Activated T-helper 1 cell treated with anti-CD3 and anti-CD28 coated beads, Interleukin-12 subunit alpha, Interleukin-12 subunit beta, Interleukin-2, Interleukin-4 antibody, amounts not matched to agents 30 ng/mL and 10 ng/mL and 1 ng/mL, durations not matched to agents 14 hours and 24 hours and 36 hours (primary cell): ENCODE measurements at regions of chr16 and their contacts with region 1.

Region 1: DNA sequence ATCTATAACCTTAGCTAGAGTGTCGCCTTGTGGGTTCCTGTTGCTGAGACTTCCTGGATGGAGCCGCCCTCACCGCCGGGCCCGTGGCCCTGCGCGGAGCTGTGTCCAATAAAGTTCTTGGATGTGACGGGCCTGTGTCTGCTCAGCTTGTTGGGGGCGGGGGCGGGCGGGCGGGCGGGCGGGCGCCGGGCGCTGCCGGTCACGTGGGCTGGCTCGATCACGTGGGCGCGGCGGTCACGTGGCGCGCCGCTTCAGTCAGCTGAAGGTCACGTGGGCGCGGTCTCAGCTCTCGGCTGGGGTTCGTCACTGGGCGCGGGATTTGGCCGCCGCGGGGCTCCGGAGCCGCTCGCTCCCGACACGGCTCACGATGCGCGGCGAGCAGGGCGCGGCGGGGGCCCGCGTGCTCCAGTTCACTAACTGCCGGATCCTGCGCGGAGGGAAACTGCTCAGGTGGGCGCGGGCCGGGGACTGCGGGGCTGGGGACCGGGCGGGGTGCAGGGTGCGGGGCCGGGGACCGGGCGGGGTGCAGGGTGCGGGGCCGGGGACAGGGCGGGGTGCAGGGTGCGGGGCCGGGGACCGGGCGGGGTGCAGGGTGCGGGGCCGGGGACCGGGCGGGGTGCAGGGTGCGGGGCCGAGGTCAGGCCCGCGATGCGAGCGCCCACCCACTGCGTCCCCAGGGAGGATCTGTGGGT is at the start of gene AMDHD2:
- DNase-seq: peak; percentile 84
- H3K4me3 Mint-ChIP-seq: peak within 1 kb of the TSS; percentile 85
- H3K27ac Mint-ChIP-seq: peak within 1 kb of the TSS; percentile 88
- H3K4me1 Mint-ChIP-seq: peaks cover 41% of the 10 kb centered on the region
- H3K27me3 Mint-ChIP-seq: no peaks in the 10 kb centered on the region
- total RNA-seq, gene AMDHD2: 32.4 and 38.3 TPM in 2 replicates

Region 2: GRCh38 chr16:2531767-2532493 is 11.7 kb after region 1 on chr16:
- intact Hi-C with region 1: loop called (anchors 1 kb)
- DNase-seq: peak; percentile 97
- H3K4me3 Mint-ChIP-seq: peak overlapping the region; percentile 100
- H3K27ac Mint-ChIP-seq: peak overlapping the region; percentile 100
- H3K4me1 Mint-ChIP-seq: peaks cover 9% of the 10 kb centered on the region
- H3K27me3 Mint-ChIP-seq: no peaks in the 10 kb centered on the region

Region 3: GRCh38 chr16:2784951-2785635 is 264.9 kb after region 1 on chr16:
- intact Hi-C with region 1: loop called (anchors 5 kb)
- DNase-seq: no peak
- H3K4me3 Mint-ChIP-seq: peak overlapping the region; percentile 76
- H3K27ac Mint-ChIP-seq: peak overlapping the region; percentile 77
- H3K4me1 Mint-ChIP-seq: no peaks in the 10 kb centered on the region
- H3K27me3 Mint-ChIP-seq: peaks cover 20% of the 10 kb centered on the region